Uterus (tissue), 4 donors: ENCODE measurements at regions of chr12 and their contacts with region 1.

Region 1: GRCh38 chr12:106386813-106387535 is 29.4 kb downstream of the POLR3B start:
- DNase-seq: no peak
- H3K4me3 ChIP-seq: no peak overlapping the region
- H3K27ac ChIP-seq: no peak overlapping the region
- H3K4me1 ChIP-seq: no peaks in the 10 kb centered on the region
- H3K27me3 ChIP-seq: no peaks in the 10 kb centered on the region
- CTCF ChIP-seq: no peak
- POLR2A ChIP-seq: no peak

Region 2: GRCh38 chr12:106428384-106428783 is 41.4 kb after region 1 on chr12:
- intact Hi-C with region 1: no loop called
- DNase-seq: peak; percentile 21 to 32
- H3K4me3 ChIP-seq: no peak overlapping the region
- H3K27ac ChIP-seq: peak overlapping the region in 1 of 2 donors; percentile 26
- H3K4me1 ChIP-seq: peaks cover 0 to 8% of the 10 kb centered on the region in 2 donors
- H3K27me3 ChIP-seq: no peaks in the 10 kb centered on the region
- CTCF ChIP-seq: no peak
- POLR2A ChIP-seq: no peak

Region 3: GRCh38 chr12:106919910-106920544 is 533.1 kb after region 1 on chr12:
- intact Hi-C with region 1: loop called (anchors 10 kb)
- DNase-seq: no peak
- H3K4me3 ChIP-seq: no peak overlapping the region
- H3K27ac ChIP-seq: no peak overlapping the region
- H3K4me1 ChIP-seq: no peaks in the 10 kb centered on the region
- H3K27me3 ChIP-seq: no peaks in the 10 kb centered on the region
- CTCF ChIP-seq: peak; percentile 71 to 83 (median 80)
- POLR2A ChIP-seq: no peak